CD8-positive, alpha-beta T cell (primary cell): ENCODE measurements at regions of chr15 and their contacts with region 1.

Region 1: DNA sequence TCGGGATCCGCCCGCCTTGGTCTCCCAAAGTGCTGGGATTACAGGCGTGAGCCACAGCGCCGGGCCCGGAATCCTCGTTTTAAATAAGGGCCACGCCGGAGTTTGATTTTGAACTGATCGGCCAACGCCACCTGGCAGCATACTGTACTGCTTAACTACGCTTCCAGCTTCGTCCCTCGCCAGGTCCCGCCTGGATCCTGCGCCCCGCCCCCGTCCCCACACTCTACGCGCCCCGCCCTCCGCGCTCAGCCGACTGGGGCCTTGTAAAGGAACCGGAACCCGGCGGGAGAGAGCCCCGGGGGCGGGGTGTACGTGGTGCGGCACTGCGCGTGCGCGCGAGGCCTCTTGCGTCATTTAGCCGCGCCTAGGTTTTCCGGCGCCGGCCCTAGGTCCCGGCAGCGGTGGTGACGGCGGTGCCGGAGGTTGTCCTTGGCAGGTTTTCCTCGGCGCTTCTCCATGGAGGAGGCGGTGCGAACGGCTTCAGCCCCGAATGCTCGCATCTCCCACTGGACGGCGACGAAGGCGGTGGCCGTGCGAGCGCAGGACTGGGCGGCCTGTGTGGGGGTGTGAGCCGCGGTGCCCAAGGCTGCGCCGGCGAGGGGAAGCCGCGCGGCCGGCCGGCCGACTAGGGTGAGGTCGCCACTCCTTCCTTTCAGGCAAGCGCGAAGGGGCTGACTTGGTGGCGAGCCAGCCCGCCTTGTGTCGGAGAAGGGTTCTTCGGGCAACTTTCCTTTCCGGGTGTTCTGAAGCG is at the start of gene NIPA2:
- DNase-seq: peak; percentile 97 to 99 (median 98)
- ATAC-seq: peak; percentile 97
- H3K4me3 ChIP-seq: peak within 1 kb of the TSS; percentile 92 to 97
- H3K4me3 Mint-ChIP-seq: peak within 1 kb of the TSS; percentile 90
- H3K27ac ChIP-seq: peak within 1 kb of the TSS; percentile 95 to 98
- H3K27ac Mint-ChIP-seq: peak within 1 kb of the TSS; percentile 92
- H3K4me1 ChIP-seq: peaks cover 29% of the 10 kb centered on the region
- H3K4me1 Mint-ChIP-seq: peaks cover 33% of the 10 kb centered on the region
- H3K27me3 ChIP-seq: no peaks in the 10 kb centered on the region
- H3K27me3 Mint-ChIP-seq: no peaks in the 10 kb centered on the region
- CTCF ChIP-seq: no peak
- total RNA-seq, gene NIPA2: 49.1 to 49.7 TPM

Region 2: GRCh38 chr15:22786868-22787698 is 51.4 kb before region 1 on chr15:
- CTCF ChIA-PET with region 1: no interaction called
- POLR2A ChIA-PET with region 1: interaction called, 4 read pairs
- intact Hi-C with region 1: loop called (anchors 1 kb)
- DNase-seq: peak in 3 of 9 experiments; percentile 9 to 23 (median 13)
- ATAC-seq: peak; percentile 27
- H3K4me3 ChIP-seq: peak overlapping the region; percentile 47 to 56
- H3K4me3 Mint-ChIP-seq: peak overlapping the region; percentile 84
- H3K27ac ChIP-seq: no peak overlapping the region
- H3K27ac Mint-ChIP-seq: peak overlapping the region; percentile 64
- H3K4me1 ChIP-seq: peaks cover 9% of the 10 kb centered on the region
- H3K4me1 Mint-ChIP-seq: peaks cover 23% of the 10 kb centered on the region
- H3K27me3 ChIP-seq: no peaks in the 10 kb centered on the region
- H3K27me3 Mint-ChIP-seq: no peaks in the 10 kb centered on the region
- CTCF ChIP-seq: no peak

Region 3: GRCh38 chr15:22811640-22812039 is 26.8 kb before region 1 on chr15:
- CTCF ChIA-PET with region 1: no interaction called
- POLR2A ChIA-PET with region 1: no interaction called
- intact Hi-C with region 1: loop called in 1 of 2 experiments (anchors 1 kb)
- DNase-seq: peak in 1 of 9 experiments; percentile 14
- ATAC-seq: no peak
- H3K4me3 ChIP-seq: no peak overlapping the region
- H3K4me3 Mint-ChIP-seq: no peak overlapping the region
- H3K27ac ChIP-seq: no peak overlapping the region
- H3K27ac Mint-ChIP-seq: no peak overlapping the region
- H3K4me1 ChIP-seq: peaks cover 3% of the 10 kb centered on the region
- H3K4me1 Mint-ChIP-seq: peaks cover 8% of the 10 kb centered on the region
- H3K27me3 ChIP-seq: no peaks in the 10 kb centered on the region
- H3K27me3 Mint-ChIP-seq: no peaks in the 10 kb centered on the region
- CTCF ChIP-seq: no peak

Region 4: GRCh38 chr15:23039151-23039916 is 200.9 kb after region 1 on chr15 and contains the start of gene TUBGCP5:
- CTCF ChIA-PET with region 1: no interaction called
- POLR2A ChIA-PET with region 1: interaction called, 4 read pairs
- intact Hi-C with region 1: loop called (anchors 1 to 10 kb)
- DNase-seq: peak; percentile 88 to 98 (median 96)
- ATAC-seq: peak; percentile 93
- H3K4me3 ChIP-seq: peak within 1 kb of the TSS; percentile 65 to 81
- H3K4me3 Mint-ChIP-seq: peak within 1 kb of the TSS; percentile 93
- H3K27ac ChIP-seq: peak within 1 kb of the TSS; percentile 40 to 79
- H3K27ac Mint-ChIP-seq: peak within 1 kb of the TSS; percentile 94
- H3K4me1 ChIP-seq: peaks cover 18% of the 10 kb centered on the region
- H3K4me1 Mint-ChIP-seq: peaks cover 26% of the 10 kb centered on the region
- H3K27me3 ChIP-seq: no peaks in the 10 kb centered on the region
- H3K27me3 Mint-ChIP-seq: no peaks in the 10 kb centered on the region
- CTCF ChIP-seq: no peak
- total RNA-seq, gene TUBGCP5: 34.4 to 38.5 TPM